PC-9 (cell line): ENCODE measurements at regions of chr19 and their contacts with region 1.

Region 1: GRCh38 chr19:13861732-13862531 is 15.0 kb upstream of the NANOS3 start:
- DNase-seq: peak; percentile 85 to 95
- H3K4me3 ChIP-seq: peak overlapping the region; percentile 64
- H3K27ac ChIP-seq: peak overlapping the region; percentile 88
- H3K4me1 ChIP-seq: peaks cover 25% of the 10 kb centered on the region
- H3K27me3 ChIP-seq: no peaks in the 10 kb centered on the region
- CTCF ChIP-seq: peak; percentile 99

Region 2: GRCh38 chr19:12314553-12314952 is 1547.4 kb before region 1 on chr19:
- CTCF ChIA-PET with region 1: no interaction called
- POLR2A ChIA-PET with region 1: interaction called, 13 read pairs
- intact Hi-C with region 1: no loop called
- DNase-seq: no peak
- H3K4me3 ChIP-seq: peak overlapping the region; percentile 29; the same call in 1 of the 2 replicates
- H3K27ac ChIP-seq: no peak overlapping the region
- H3K4me1 ChIP-seq: no peaks in the 10 kb centered on the region
- H3K27me3 ChIP-seq: no peaks in the 10 kb centered on the region
- CTCF ChIP-seq: no peak

Region 3: DNA sequence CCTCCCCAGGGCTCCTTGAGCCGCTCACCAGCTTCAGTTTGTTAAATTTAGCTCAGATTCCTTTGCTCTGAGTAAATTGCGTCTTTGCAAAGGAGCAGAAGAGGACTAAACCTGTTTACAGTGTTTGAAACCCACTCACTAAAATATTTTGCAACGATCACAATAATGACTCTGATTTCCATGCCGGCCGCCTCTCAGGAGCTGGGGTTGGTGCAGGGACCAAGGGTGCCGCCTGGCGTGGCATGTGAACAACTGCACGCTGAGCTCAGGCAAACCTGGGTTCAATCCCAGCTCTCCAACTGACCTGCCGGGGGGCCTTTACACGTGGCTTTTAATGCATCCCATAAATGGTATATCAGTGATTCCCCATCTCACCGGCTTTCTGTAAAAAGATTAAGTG is 287.0 kb before region 1 on chr19:
- CTCF ChIA-PET with region 1: no interaction called
- POLR2A ChIA-PET with region 1: no interaction called
- intact Hi-C with region 1: no loop called
- DNase-seq: peak in 1 of 2 experiments; percentile 6
- H3K4me3 ChIP-seq: no peak overlapping the region
- H3K27ac ChIP-seq: no peak overlapping the region
- H3K4me1 ChIP-seq: no peaks in the 10 kb centered on the region
- H3K27me3 ChIP-seq: peaks cover 47% of the 10 kb centered on the region
- CTCF ChIP-seq: peak; percentile 59

Region 4: GRCh38 chr19:13597640-13598039 is 264.3 kb before region 1 on chr19:
- CTCF ChIA-PET with region 1: no interaction called
- POLR2A ChIA-PET with region 1: no interaction called
- intact Hi-C with region 1: loop called (anchors 2 kb)
- DNase-seq: peak; percentile 40 to 43
- H3K4me3 ChIP-seq: no peak overlapping the region
- H3K27ac ChIP-seq: no peak overlapping the region
- H3K4me1 ChIP-seq: no peaks in the 10 kb centered on the region
- H3K27me3 ChIP-seq: peaks cover 31% of the 10 kb centered on the region
- CTCF ChIP-seq: peak; percentile 78

Region 5: DNA sequence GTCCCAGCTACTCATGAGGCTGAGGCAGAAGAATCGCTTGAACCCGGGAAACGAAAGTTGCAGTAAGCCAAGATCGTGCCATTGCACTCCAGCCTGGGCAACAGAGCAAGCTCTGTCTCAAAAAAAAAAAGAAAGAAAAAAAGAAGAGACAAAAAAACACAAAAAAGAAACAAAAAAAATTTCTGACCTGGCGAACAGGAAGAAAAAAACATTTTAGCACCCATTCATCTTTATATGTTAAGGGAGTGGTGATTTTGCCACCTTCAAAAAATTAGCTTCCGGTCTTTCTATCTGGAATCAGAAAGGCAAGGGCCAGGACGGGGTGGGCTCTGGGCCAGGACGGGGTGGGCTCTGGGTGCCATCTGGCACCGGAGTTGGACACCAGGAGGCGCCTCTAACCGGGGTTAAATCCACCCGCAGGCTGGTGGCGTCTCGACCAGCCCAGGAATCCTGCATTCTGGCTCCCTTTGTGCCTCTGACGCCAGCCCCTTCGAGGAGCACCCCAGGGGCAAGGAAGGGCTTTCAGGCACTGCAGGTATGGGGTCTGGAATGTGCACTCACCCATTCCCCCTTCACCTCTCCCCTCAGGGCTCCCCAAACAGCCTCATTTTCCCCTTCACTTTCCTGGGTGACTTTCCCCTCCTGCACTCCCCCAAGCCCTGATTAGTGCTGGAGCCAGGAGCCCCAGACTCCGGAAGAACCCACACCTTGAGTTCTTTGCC is 77.0 kb before region 1 on chr19:
- CTCF ChIA-PET with region 1: interaction called, 7 read pairs
- POLR2A ChIA-PET with region 1: interaction called, 24 read pairs
- intact Hi-C with region 1: loop called (anchors 1 kb)
- DNase-seq: peak; percentile 55 to 71
- H3K4me3 ChIP-seq: no peak overlapping the region
- H3K27ac ChIP-seq: peak overlapping the region; percentile 24; the same call in 1 of the 2 replicates
- H3K4me1 ChIP-seq: peaks cover 27% of the 10 kb centered on the region
- H3K27me3 ChIP-seq: no peaks in the 10 kb centered on the region
- CTCF ChIP-seq: peak; percentile 86

Region 6: GRCh38 chr19:13803045-13803444 is 58.9 kb before region 1 on chr19:
- CTCF ChIA-PET with region 1: no interaction called
- POLR2A ChIA-PET with region 1: interaction called, 14 read pairs
- intact Hi-C with region 1: no loop called
- DNase-seq: peak; percentile 88 to 89
- H3K4me3 ChIP-seq: no peak overlapping the region
- H3K27ac ChIP-seq: peak overlapping the region; percentile 85
- H3K4me1 ChIP-seq: peaks cover 31% of the 10 kb centered on the region
- H3K27me3 ChIP-seq: no peaks in the 10 kb centered on the region
- CTCF ChIP-seq: no peak

Region 7: GRCh38 chr19:13833330-13834243 is 28.3 kb before region 1 on chr19:
- CTCF ChIA-PET with region 1: interaction called, 10 read pairs
- POLR2A ChIA-PET with region 1: interaction called, 14 read pairs
- intact Hi-C with region 1: loop called (anchors 1 kb)
- DNase-seq: peak; percentile 87 to 95
- H3K4me3 ChIP-seq: peak overlapping the region; percentile 22; the same call in 1 of the 2 replicates
- H3K27ac ChIP-seq: peak overlapping the region; percentile 59
- H3K4me1 ChIP-seq: peaks cover 52% of the 10 kb centered on the region
- H3K27me3 ChIP-seq: no peaks in the 10 kb centered on the region
- CTCF ChIP-seq: no peak; the same call in none of the 2 replicates

Region 8: DNA sequence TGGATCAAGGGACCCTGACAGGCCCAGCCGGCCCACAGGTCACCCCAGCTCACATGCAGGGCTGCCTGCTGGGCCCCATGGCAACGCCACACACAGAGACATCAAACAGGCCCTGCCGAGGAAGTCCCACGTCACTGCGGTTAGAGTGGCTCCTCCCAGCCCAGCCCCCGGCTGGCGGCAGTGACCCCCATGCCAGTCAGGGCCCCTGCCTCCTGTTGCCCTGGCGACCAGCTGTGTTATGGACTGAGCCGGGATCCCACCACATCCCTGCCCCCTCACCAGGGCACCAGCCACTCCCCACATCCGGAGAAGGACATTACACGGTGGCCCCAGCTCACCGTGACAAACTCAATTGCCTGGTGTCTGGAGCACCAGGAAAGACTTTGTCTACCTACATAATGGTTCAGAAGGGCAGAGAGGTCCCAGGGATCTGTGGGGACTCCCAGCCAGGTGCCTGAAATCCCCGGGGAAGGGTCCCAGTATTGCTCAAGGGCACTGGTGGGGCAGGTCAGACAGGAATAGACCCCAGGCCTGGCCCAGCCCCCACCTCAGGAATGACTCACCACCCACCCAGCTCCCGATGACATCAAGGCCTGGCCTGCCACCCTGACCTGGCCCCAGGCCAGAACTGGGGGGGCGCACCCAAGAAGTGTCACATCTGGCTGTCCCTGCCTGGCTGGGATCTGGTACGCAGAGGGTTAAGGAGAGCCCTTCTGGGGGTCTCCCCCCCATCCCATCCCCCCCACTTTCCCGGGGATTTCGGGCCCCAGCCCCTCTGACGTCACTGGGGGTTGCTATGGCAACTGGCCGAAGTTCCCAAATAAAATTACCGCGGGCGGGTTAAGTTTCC is 15.2 kb before region 1 on chr19:
- CTCF ChIA-PET with region 1: interaction called, 6 read pairs
- POLR2A ChIA-PET with region 1: interaction called, 39 read pairs
- intact Hi-C with region 1: loop called (anchors 1 kb)
- DNase-seq: peak; percentile 93 to 97
- H3K4me3 ChIP-seq: peak overlapping the region; percentile 77
- H3K27ac ChIP-seq: peak overlapping the region; percentile 97
- H3K4me1 ChIP-seq: peaks cover 70% of the 10 kb centered on the region
- H3K27me3 ChIP-seq: no peaks in the 10 kb centered on the region
- CTCF ChIP-seq: no peak